Psoas muscle (tissue), 8 donors: ENCODE measurements at regions of chr6 and their contacts with region 1.

Region 1: DNA sequence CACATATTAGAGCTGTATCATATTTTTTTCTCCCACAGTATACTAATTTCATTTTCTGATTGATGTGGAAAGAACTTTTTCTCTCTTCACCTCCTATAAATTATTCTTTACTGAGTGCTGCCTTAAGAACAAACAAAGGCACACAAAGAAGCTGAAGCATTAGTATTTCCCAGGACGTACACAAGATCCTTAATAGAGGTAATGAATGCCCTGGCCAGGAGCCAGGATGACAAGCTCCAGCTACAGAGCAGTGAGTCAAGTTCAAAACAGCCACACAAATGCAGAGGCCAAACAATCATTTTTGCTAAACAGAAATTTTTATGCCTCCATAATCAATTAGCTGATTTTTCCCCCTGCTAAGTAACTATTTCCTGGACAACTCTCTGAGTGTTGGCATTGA is 639.6 kb downstream of the EPHA7 start:
- DNase-seq: peak in 1 of 2 donors; percentile 16
- ATAC-seq: no peak
- H3K4me3 ChIP-seq: no peak overlapping the region
- H3K27ac ChIP-seq: no peak overlapping the region
- H3K4me1 ChIP-seq: no peaks in the 10 kb centered on the region
- H3K27me3 ChIP-seq: no peaks in the 10 kb centered on the region
- CTCF ChIP-seq: no peak

Region 2: GRCh38 chr6:92446052-92446451 is 333.7 kb before region 1 on chr6:
- intact Hi-C with region 1: no loop called
- DNase-seq: no peak
- ATAC-seq: no peak
- H3K4me3 ChIP-seq: no peak overlapping the region
- H3K27ac ChIP-seq: no peak overlapping the region
- H3K4me1 ChIP-seq: no peaks in the 10 kb centered on the region
- H3K27me3 ChIP-seq: no peaks in the 10 kb centered on the region
- CTCF ChIP-seq: no peak

Region 3: DNA sequence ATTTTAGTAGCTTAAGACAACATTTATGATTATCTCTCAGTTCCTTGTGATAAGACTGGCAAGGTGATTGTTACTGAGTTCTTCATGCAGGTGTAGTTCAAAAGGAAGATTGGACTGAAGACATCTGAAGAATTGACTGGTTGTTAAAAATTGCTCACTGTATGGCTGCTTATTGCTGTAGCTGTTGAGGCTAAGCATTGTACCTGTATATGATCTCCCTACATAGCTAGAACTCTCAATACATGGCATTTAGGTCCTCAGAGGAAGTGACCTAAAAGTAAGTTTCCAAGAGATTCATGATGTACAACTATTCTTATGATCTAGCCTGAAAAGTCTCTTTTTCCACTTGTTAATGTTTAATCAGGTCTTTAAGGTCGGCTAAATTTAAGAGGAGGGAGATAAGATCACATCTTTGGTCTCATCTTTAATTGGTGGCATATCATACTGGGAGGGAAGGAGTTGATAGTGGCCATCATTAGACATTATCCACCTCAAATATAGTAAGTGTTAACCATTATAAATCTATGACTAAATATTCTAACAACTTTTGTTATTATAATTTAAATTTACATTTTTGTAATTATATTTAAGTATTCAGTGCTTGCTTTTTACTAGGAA is 1040.8 kb after region 1 on chr6:
- intact Hi-C with region 1: loop called in 1 of 2 experiments (anchors 5 kb)
- DNase-seq: no peak
- ATAC-seq: no peak
- H3K4me3 ChIP-seq: no peak overlapping the region
- H3K27ac ChIP-seq: no peak overlapping the region
- H3K4me1 ChIP-seq: no peaks in the 10 kb centered on the region
- H3K27me3 ChIP-seq: no peaks in the 10 kb centered on the region
- CTCF ChIP-seq: no peak